ENCODE measurements at regions of chr3 and their contacts with region 1.

Region 1: DNA sequence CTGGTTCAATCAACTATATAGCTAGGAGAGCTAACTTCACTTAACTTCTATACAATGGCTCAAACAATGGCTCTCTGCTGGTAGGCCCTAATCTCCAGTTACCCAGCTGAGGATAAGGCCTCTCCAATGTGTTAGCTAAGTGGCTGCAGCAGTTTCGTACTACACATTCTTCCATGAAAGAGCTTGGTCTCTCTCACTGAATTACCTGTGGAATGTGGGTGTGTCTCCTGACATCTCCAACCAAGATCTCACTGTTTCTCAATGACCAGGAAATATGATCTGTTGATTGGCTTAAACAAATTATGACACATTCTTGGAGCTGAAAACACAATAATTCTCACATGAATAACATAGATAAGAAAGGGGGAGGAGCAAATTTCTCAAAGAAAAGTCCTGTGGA is 169.8 kb upstream of the ROBO1 start:
- DNase-seq: peak; percentile 61 to 91
- H3K4me3 ChIP-seq: no peak overlapping the region
- H3K27ac ChIP-seq: peak overlapping the region; percentile 83
- H3K4me1 ChIP-seq: peaks cover 17% of the 10 kb centered on the region
- H3K27me3 ChIP-seq: no peaks in the 10 kb centered on the region
- CTCF ChIP-seq: no peak

Region 2: GRCh38 chr3:79598594-79598993 is 339.0 kb before region 1 on chr3:
- CTCF ChIA-PET with region 1: no interaction called
- POLR2A ChIA-PET with region 1: no interaction called
- intact Hi-C with region 1: loop called (anchors 10 kb)
- DNase-seq: no peak
- H3K4me3 ChIP-seq: no peak overlapping the region
- H3K27ac ChIP-seq: no peak overlapping the region
- H3K4me1 ChIP-seq: no peaks in the 10 kb centered on the region
- H3K27me3 ChIP-seq: no peaks in the 10 kb centered on the region
- CTCF ChIP-seq: no peak

Region 3: DNA sequence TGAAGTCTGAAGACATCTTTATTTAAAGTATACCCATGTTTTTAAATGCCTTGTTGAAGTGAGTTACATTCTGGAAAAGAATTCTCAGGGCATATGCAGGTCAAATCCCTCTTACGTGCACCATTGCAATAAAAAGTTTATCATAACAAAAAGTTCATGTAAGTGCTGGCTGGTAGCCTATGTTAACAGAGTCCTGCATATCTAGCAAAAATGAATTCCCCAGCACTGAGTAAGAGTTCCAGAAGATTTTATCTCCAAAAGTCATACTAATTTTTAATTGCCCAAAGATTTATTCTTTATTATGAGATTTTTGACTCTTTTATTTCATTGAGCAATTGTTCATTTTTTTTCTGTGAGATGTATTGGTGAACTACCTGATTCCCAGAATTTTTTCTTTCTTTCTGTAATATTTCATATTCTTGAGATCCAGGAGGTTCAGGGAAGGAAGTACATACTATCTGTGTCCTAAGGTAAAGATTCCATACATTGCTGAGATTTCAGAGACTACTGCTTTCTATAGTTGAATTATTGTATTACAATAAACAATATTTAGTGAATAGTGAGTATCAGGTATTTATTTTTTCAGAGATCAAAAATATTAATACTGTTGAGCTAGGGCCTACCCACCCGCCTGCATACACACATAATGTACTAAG is 64.9 kb before region 1 on chr3:
- CTCF ChIA-PET with region 1: no interaction called
- POLR2A ChIA-PET with region 1: no interaction called
- intact Hi-C with region 1: loop called (anchors 1 kb)
- DNase-seq: peak; percentile 5 to 78
- H3K4me3 ChIP-seq: no peak overlapping the region
- H3K27ac ChIP-seq: peak overlapping the region; percentile 8
- H3K4me1 ChIP-seq: peaks cover 17% of the 10 kb centered on the region
- H3K27me3 ChIP-seq: no peaks in the 10 kb centered on the region
- CTCF ChIP-seq: no peak

Region 4: GRCh38 chr3:79886204-79886603 is 51.4 kb before region 1 on chr3:
- CTCF ChIA-PET with region 1: no interaction called
- POLR2A ChIA-PET with region 1: no interaction called
- intact Hi-C with region 1: no loop called
- DNase-seq: no peak
- H3K4me3 ChIP-seq: no peak overlapping the region
- H3K27ac ChIP-seq: no peak overlapping the region
- H3K4me1 ChIP-seq: no peaks in the 10 kb centered on the region
- H3K27me3 ChIP-seq: no peaks in the 10 kb centered on the region
- CTCF ChIP-seq: no peak

Region 5: DNA sequence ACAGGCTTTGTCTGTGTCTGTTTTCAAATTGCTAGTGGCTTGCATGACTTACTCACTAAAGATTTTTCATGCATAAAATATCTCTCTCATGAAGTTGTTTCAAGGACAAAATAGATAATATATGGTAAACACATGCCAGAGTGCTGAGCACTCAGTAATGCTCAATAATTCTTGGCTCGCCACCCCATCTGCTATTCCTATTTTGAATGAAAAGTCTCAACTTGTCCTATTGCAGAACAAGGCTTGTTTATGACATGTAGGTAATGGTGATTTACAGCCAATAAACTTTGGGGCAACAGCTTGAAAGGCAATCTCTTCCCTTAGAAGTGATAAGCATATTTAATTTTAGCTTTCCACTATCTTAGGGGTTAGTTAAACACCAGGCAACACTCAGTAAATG is 619.2 kb after region 1 on chr3:
- CTCF ChIA-PET with region 1: no interaction called
- POLR2A ChIA-PET with region 1: no interaction called
- intact Hi-C with region 1: no loop called
- DNase-seq: no peak
- H3K4me3 ChIP-seq: no peak overlapping the region
- H3K27ac ChIP-seq: no peak overlapping the region
- H3K4me1 ChIP-seq: no peaks in the 10 kb centered on the region
- H3K27me3 ChIP-seq: no peaks in the 10 kb centered on the region
- CTCF ChIP-seq: no peak